A673 (cell line): ENCODE measurements at regions of chr5 and their contacts with region 1.

Region 1: GRCh38 chr5:14399054-14399692 is 182.4 kb upstream of the OTULINL start:
- DNase-seq: peak; percentile 81
- H3K4me3 ChIP-seq: no peak overlapping the region
- H3K27ac ChIP-seq: no peak overlapping the region
- H3K4me1 ChIP-seq: peaks cover 42% of the 10 kb centered on the region
- H3K27me3 ChIP-seq: no peaks in the 10 kb centered on the region
- CTCF ChIP-seq: peak; percentile 79

Region 2: DNA sequence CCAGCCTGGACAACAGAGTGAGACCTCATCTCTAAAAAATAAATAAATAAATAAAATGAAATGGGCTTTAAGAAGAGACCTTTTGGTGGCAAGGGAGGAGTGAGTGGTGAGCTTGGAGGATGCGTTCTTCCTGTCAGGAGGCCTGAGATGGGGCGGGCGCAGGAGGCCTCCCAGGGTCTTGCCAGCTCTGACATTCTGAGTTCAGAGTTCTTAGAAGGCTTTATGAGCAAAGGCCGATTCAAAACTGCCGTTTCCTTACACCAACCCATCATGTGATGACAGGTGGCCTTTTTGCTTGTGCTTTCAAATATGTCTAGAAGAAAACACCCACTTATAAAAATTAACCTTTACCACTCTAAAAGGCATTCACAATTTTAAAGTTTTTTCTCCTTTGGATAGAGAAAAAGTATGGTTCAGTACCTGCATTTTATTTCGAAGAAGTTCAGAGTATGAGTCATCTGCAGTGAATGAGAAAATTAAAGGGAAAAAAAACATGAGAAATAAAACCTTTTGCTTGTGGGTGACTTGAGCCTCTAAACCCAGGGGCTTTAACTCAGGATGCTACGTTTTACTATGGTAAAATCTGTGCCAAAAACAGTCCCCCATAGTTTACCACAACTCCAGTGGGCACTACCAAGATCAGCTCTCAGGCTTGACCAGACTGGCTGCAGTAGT is 25.0 kb after region 1 on chr5:
- CTCF ChIA-PET with region 1: interaction called, 10 read pairs
- POLR2A ChIA-PET with region 1: no interaction called
- intact Hi-C with region 1: no loop called
- DNase-seq: no peak
- H3K4me3 ChIP-seq: no peak overlapping the region
- H3K27ac ChIP-seq: no peak overlapping the region
- H3K4me1 ChIP-seq: peaks cover 5% of the 10 kb centered on the region
- H3K27me3 ChIP-seq: no peaks in the 10 kb centered on the region
- CTCF ChIP-seq: no peak